ENCODE measurements at regions of chr16 and their contacts with region 1.

Region 1: GRCh38 chr16:2513405-2514322 is at the start of gene ATP6V0C:
- DNase-seq: peak; percentile 83
- ATAC-seq: peak; percentile 78
- H3K4me3 ChIP-seq: peak within 1 kb of the TSS; percentile 89 to 97 (median 94)
- H3K27ac ChIP-seq: peak within 1 kb of the TSS; percentile 91
- H3K4me1 ChIP-seq: peaks cover 57% of the 10 kb centered on the region
- H3K27me3 ChIP-seq: no peaks in the 10 kb centered on the region; a peak in 1 of 5 replicates
- CTCF ChIP-seq: no peak
- EP300 ChIP-seq: no peak
- POLR2A ChIP-seq: peak; percentile 82 to 86
- RAD21 ChIP-seq: no peak
- total RNA-seq, gene ATP6V0C: 7.2 and 10.4 TPM in 2 replicates

Region 2: GRCh38 chr16:2447920-2448583 is 65.6 kb before region 1 on chr16:
- CTCF ChIA-PET with region 1: no interaction called
- POLR2A ChIA-PET with region 1: no interaction called
- in situ Hi-C with region 1: no loop called
- intact Hi-C with region 1: no loop called
- DNase-seq: no peak
- ATAC-seq: no peak
- H3K4me3 ChIP-seq: no peak overlapping the region
- H3K27ac ChIP-seq: no peak overlapping the region
- H3K4me1 ChIP-seq: no peaks in the 10 kb centered on the region
- H3K27me3 ChIP-seq: no peaks in the 10 kb centered on the region
- CTCF ChIP-seq: no peak
- EP300 ChIP-seq: no peak
- POLR2A ChIP-seq: no peak
- RAD21 ChIP-seq: no peak

Region 3: DNA sequence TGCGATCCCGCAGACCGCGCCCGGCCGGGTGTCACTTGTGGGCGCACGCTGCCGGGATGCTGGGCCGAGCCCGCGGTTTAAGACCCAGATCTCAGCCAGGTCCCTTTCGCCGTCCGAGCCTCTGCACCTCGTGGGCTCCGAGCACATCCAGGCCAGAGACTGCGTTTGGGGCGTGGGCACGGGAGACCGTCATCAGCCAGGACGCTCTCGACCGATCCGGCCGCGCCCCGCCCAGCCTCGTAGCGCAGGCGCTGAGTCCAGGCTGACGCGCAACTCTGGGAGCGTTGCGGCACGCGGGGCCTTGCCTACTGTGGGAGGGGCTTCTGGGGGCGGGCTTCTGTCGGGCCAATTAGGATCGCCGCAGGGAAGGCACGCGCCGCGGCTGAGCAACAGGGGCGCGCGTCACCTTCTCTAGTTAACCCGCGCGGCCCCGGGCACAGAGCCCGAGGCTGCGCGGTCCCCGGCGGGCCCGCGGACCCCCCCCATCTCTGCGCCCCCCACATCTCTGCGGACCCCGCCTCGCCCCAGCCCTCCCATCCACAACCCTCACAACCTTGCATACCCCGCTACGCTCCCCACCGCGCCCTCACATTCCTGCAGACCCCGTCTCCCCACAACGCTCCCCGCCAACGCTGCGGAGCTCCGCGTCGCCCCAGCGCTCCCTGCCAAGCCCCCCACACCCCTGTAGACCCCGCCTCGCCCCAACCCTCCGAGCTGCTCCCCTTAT is 18.3 kb after region 1 on chr16:
- CTCF ChIA-PET with region 1: no interaction called
- POLR2A ChIA-PET with region 1: interaction called, 10 read pairs
- in situ Hi-C with region 1: no loop called
- intact Hi-C with region 1: no loop called
- DNase-seq: peak; percentile 92
- ATAC-seq: peak; percentile 76
- H3K4me3 ChIP-seq: peak overlapping the region; percentile 47 to 77 (median 69); a peak in 5 of 6 replicates
- H3K27ac ChIP-seq: peak overlapping the region; percentile 75
- H3K4me1 ChIP-seq: peaks cover 59% of the 10 kb centered on the region
- H3K27me3 ChIP-seq: no peaks in the 10 kb centered on the region
- CTCF ChIP-seq: peak; percentile 17; the same call in 1 of the 2 replicates
- EP300 ChIP-seq: no peak
- POLR2A ChIP-seq: peak; percentile 43 to 90; a peak in 3 of 4 replicates
- RAD21 ChIP-seq: peak; percentile 48; the same call in 1 of the 2 replicates

Region 4: DNA sequence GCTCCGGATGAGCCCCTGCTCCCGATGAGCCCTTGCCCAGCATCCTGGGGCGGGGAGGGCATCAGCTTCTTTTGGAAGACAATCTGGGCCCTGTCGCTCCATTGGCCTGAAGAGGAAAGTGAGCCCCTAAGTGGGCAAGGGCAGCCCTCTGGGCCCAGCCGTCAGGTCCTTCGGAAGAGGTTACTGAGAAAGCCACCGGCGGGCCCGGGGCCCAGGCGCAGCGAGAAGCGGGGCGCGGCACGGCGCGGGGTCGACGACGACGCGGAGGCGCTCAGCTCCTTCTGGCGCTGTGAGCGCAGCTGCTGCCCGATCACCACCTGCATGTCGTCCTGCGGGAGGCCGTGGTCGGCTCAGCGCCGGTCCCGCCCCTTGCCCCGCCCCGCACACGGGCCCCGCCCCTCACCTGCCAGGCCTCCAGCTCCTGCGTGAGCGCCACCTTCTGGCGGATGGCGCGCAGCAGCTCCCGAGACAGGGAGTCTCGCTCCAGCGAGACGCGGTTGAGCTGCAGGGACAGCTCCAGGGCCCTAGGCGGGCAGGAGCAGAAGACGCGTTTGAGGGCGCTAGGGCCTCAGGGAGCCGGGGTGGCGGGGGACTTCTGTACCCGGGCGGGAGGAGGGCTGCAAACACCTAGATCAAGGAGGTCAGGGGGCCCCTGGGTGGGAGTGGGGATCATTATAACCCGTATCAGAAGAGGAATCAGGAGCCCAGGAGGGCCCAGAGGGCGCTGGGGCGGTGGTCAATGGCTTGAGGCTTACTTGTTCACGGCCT is 514.5 kb after region 1 on chr16:
- CTCF ChIA-PET with region 1: no interaction called
- POLR2A ChIA-PET with region 1: no interaction called
- in situ Hi-C with region 1: no loop called
- intact Hi-C with region 1: no loop called
- DNase-seq: peak; percentile 65
- ATAC-seq: peak; percentile 34
- H3K4me3 ChIP-seq: peak overlapping the region in 1 of 3 experiments; percentile 61; a peak in 1 of 6 replicates
- H3K27ac ChIP-seq: no peak overlapping the region
- H3K4me1 ChIP-seq: peaks cover 34% of the 10 kb centered on the region
- H3K27me3 ChIP-seq: peaks cover 5 to 44% of the 10 kb centered on the region in 2 experiments
- CTCF ChIP-seq: peak; percentile 95
- EP300 ChIP-seq: no peak
- POLR2A ChIP-seq: peak; percentile 23 to 48; a peak in 2 of 4 replicates
- RAD21 ChIP-seq: peak; percentile 72

Measured in HepG2 (cell line).